A549 (cell line): ENCODE measurements at regions of chr17 and their contacts with region 1.

Region 1: DNA sequence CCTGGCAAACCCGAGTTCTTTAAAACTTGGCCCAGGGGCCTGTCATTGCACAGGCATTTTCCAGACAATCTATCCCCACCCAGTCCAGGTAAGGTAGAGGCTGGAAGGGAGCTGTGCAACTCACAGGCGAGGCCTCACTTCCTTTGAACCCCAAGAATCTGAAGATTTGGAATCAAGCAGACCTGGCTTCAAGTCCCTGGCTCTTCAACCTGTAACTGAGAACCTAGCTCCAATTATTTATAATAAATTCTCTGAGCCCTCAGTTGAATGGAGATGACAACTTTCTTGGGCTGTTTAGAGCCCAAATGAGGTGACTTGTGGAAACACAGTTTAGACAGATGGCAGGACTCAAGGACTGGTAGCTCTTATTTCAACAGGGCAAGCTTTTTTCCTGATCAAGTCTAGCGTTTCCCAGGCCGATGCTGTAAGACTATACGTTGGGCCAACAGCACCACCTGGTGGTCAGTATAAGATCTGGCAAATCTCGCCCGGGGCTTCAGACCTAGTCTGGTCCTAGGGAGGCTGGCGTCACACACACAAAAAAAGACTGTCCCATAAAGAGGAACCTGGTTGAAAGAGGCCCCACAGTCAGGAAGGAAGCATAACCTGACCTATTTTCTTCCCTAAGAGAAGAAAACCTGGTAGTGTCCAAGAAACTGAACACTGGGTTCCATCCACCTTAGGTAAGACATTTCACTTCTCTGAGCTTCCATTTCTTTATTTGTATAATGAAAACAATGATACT is 117.9 kb downstream of the C17orf67 start:
- DNase-seq: peak; percentile 84 to 88
- ATAC-seq: peak; percentile 94 to 99
- H3K4me3 ChIP-seq: no peak overlapping the region
- H3K27ac ChIP-seq: no peak overlapping the region
- H3K4me1 ChIP-seq: no peaks in the 10 kb centered on the region
- CTCF ChIP-seq: peak; percentile 93
- EP300 ChIP-seq: no peak
- POLR2A ChIP-seq: no peak
- RAD21 ChIP-seq: peak; percentile 97

Region 2: GRCh38 chr17:55870044-55870443 is 845.7 kb before region 1 on chr17:
- CTCF ChIA-PET with region 1: no interaction called
- POLR2A ChIA-PET with region 1: no interaction called
- DNase-seq: no peak
- ATAC-seq: no peak
- H3K4me3 ChIP-seq: no peak overlapping the region
- H3K27ac ChIP-seq: no peak overlapping the region
- H3K4me1 ChIP-seq: no peaks in the 10 kb centered on the region
- CTCF ChIP-seq: no peak
- EP300 ChIP-seq: no peak
- POLR2A ChIP-seq: no peak
- RAD21 ChIP-seq: no peak

Region 3: DNA sequence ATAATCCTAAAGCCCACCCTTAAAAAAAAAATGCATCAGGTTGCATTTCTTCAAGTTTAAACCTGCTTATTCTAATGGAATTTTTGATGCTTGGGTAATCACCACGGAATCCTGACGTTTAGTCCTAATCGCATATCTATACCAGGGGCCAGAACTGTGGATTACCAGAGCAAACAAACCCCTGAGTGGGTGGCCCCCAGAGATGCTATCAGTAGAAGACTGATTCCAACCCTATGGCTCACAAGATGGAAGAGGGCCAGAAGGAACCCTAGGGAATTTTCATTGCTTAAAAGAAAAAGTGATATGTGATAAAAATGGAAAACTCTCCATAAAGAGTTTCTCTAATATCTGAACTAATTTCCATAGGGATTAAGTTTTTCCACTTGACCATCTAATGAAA is 274.5 kb before region 1 on chr17:
- CTCF ChIA-PET with region 1: no interaction called
- POLR2A ChIA-PET with region 1: no interaction called
- DNase-seq: peak in 1 of 2 experiments; percentile 8
- ATAC-seq: no peak
- H3K4me3 ChIP-seq: no peak overlapping the region
- H3K27ac ChIP-seq: no peak overlapping the region
- H3K4me1 ChIP-seq: no peaks in the 10 kb centered on the region
- CTCF ChIP-seq: no peak
- EP300 ChIP-seq: no peak
- POLR2A ChIP-seq: no peak
- RAD21 ChIP-seq: no peak

Region 4: DNA sequence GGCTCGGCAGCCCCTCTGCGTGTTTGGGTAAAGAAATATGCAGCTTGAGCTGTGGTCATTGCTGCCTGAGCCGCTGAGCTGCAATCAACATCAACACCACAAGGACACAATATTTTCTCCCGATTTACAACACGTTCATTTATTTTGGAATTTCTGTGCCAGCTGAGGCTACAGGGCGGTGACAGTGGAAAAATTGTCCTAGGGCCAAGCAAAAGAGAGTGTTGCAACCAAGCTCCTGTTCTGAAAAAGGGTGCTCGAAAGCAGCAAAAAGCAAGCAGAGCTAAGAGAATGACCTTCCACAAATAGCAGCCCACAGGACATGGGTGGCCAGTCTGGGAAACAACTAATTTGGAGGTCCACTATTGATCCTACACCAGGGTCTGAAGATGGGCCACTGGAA is 157.7 kb before region 1 on chr17:
- CTCF ChIA-PET with region 1: interaction called, 10 read pairs
- POLR2A ChIA-PET with region 1: no interaction called
- DNase-seq: no peak
- ATAC-seq: no peak
- H3K4me3 ChIP-seq: no peak overlapping the region
- H3K27ac ChIP-seq: no peak overlapping the region
- H3K4me1 ChIP-seq: no peaks in the 10 kb centered on the region
- CTCF ChIP-seq: no peak
- EP300 ChIP-seq: no peak
- POLR2A ChIP-seq: no peak
- RAD21 ChIP-seq: no peak

Region 5: GRCh38 chr17:56602292-56603130 is 113.3 kb before region 1 on chr17:
- CTCF ChIA-PET with region 1: interaction called, 400 read pairs
- POLR2A ChIA-PET with region 1: no interaction called
- DNase-seq: no peak
- ATAC-seq: no peak; a peak in 1 of 6 replicates
- H3K4me3 ChIP-seq: no peak overlapping the region
- H3K27ac ChIP-seq: no peak overlapping the region
- H3K4me1 ChIP-seq: peaks cover under 1% of the 10 kb centered on the region; the same call in 1 of the 3 replicates
- CTCF ChIP-seq: no peak
- EP300 ChIP-seq: no peak
- POLR2A ChIP-seq: no peak
- RAD21 ChIP-seq: no peak

Region 6: GRCh38 chr17:56656701-56657327 is 59.0 kb before region 1 on chr17:
- CTCF ChIA-PET with region 1: interaction called, 14 read pairs
- POLR2A ChIA-PET with region 1: no interaction called
- DNase-seq: no peak
- ATAC-seq: no peak
- H3K4me3 ChIP-seq: no peak overlapping the region
- H3K27ac ChIP-seq: no peak overlapping the region
- H3K4me1 ChIP-seq: no peaks in the 10 kb centered on the region
- CTCF ChIP-seq: no peak
- EP300 ChIP-seq: no peak
- POLR2A ChIP-seq: no peak
- RAD21 ChIP-seq: no peak

Region 7: DNA sequence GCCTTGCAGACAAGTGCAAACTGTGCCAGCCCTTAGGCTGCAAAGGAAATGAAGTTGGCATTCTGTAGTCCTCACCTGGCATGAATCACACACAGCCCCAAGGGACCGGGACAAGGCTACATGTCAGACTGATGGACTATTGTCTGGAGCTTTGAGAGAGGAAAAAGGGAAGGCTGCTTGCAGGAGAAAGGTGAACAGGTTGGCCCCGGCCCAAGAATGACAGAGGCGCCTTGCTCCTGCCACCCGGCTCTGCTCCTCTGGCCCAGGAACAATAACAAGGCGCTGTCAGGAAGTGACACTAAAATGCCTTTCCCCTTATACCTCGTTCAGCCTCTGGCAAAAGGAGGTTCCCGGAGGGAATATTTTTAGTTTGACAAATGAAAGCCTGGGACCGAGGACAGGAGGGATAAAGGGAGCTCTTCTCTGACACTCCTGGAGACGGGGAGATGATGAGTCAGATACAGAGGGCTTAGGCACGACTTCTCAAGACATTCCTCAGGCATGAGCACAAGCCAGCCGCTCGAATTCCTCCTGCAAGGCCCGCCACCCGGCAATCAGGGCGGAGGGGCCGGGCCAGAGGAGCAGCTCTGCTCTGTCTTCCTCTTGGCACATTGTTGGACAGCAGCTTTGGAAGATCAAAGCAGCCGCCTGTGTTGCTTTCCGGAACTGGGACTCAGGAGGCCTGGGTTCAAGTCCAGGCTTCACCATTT is 16.4 kb before region 1 on chr17:
- CTCF ChIA-PET with region 1: interaction called, 183 read pairs
- POLR2A ChIA-PET with region 1: no interaction called
- DNase-seq: peak; percentile 97 to 99
- ATAC-seq: peak; percentile 98 to 99
- H3K4me3 ChIP-seq: 0 out of 3 replicates have a peak overlapping the region, but pooled peaks have one; percentile 13
- H3K27ac ChIP-seq: peak overlapping the region; percentile 66 to 84
- H3K4me1 ChIP-seq: peaks cover 21% of the 10 kb centered on the region
- CTCF ChIP-seq: no peak
- EP300 ChIP-seq: peak in 1 of 2 experiments; percentile 71; a peak in 2 of 5 replicates
- POLR2A ChIP-seq: no peak
- RAD21 ChIP-seq: no peak

Region 8: DNA sequence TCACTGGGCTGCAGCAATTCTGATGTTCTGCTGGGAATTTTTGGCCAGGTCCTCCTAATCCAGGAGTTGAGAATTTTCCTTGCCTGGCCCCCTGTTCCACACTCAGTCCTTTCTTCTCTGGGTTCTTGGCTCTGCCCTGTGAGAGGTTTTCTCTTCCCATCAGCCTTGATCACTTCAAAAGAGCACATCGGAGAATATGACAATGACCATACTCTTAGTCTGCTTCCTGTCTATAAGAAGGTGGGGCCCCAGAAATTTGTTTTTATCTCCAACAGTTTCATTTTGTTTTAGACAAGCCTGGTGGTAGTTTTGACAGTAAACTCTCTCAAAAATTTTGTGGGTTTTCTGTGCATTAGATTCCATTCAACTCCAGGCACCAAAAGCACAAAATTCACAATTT is 47.2 kb after region 1 on chr17:
- CTCF ChIA-PET with region 1: interaction called, 20 read pairs
- POLR2A ChIA-PET with region 1: no interaction called
- DNase-seq: no peak
- ATAC-seq: no peak
- H3K4me3 ChIP-seq: no peak overlapping the region
- H3K27ac ChIP-seq: no peak overlapping the region
- H3K4me1 ChIP-seq: no peaks in the 10 kb centered on the region
- CTCF ChIP-seq: no peak
- EP300 ChIP-seq: no peak
- POLR2A ChIP-seq: no peak
- RAD21 ChIP-seq: no peak

Region 9: DNA sequence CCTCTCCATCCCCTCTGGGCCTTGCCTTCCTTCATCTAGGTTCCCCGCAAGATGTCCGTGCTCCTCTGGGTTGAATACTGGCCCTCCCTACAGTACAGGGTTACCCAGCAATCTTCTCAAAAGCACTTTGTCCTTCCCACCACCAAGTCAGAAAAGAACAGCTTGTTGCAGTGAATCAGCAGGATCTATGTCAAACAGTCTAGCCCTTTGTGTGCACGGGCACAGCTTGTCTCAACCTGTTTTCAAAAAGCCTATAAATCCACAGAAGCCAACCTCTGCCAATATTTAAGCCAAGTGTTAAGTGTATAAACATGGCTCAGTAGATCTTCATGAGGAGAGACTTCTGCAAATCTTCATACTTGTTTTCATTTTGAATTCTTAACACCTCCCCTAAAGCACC is 92.7 kb after region 1 on chr17:
- CTCF ChIA-PET with region 1: no interaction called
- POLR2A ChIA-PET with region 1: no interaction called
- DNase-seq: no peak
- ATAC-seq: no peak
- H3K4me3 ChIP-seq: no peak overlapping the region
- H3K27ac ChIP-seq: no peak overlapping the region
- H3K4me1 ChIP-seq: no peaks in the 10 kb centered on the region
- CTCF ChIP-seq: no peak
- EP300 ChIP-seq: no peak
- POLR2A ChIP-seq: no peak
- RAD21 ChIP-seq: no peak